Common myeloid progenitor, CD34-positive (primary cell): ENCODE measurements at regions of chr12 and their contacts with region 1.

Region 1: DNA sequence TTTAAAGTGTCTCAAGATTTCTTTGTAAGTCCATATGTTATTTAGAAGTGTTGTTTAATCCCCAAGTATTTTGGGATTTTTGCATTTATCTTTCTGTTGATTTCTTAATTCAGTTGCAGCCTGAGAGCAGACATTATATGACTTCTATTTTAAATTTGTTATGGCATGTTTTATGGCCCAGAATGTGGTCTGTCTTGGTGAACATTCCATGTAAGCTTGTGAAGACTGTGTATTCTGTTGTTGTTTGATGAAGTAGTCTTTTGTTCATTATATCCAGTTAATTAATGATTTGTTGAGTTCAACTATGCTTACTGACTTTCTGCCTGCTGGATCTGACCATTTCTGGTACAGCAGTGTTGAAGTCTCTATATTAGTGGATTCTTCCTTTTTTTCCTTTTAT is 34.0 kb downstream of the LEMD3 start:
- DNase-seq: no peak
- H3K4me3 ChIP-seq: no peak overlapping the region
- H3K27ac ChIP-seq: no peak overlapping the region
- H3K4me1 ChIP-seq: peaks cover 10 to 28% (median 25%) of the 10 kb centered on the region in 4 experiments
- H3K27me3 ChIP-seq: no peaks in the 10 kb centered on the region

Region 2: DNA sequence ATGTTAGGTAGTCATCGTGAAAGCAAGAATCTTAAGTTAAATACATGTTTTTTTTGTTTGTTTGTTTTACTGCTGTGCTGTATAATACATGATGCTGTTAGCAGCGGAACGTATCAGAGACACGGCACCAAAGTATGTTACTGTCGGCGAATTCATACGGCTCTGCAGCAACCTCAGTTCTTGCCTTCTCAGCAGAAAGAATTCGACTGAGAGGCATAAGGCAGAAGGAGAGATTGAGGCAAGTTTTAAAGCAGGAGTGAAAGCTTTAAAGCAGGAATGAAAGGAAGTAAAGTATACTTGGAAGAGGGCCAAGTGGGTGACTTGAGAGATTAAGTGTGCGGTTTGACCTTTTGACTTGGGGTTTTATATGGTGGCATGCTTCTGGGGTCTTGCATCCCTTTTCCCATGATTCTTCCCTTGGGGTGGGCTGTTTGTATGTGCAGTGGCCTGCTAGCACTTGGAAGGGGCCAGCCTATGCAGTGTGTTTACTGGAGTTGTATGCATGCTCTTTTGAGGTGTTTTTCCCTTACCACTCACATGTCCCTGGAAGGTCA is 10.3 kb before region 1 on chr12:
- CTCF ChIA-PET with region 1: interaction called, 6 read pairs
- POLR2A ChIA-PET with region 1: interaction called, 11 read pairs
- DNase-seq: peak in 2 of 3 donors; percentile 71 to 79
- H3K4me3 ChIP-seq: peak overlapping the region in 3 of 7 experiments; percentile 16 to 53 (median 38)
- H3K27ac ChIP-seq: no peak overlapping the region
- H3K4me1 ChIP-seq: peaks cover 6 to 47% (median 11%) of the 10 kb centered on the region in 4 experiments
- H3K27me3 ChIP-seq: no peaks in the 10 kb centered on the region

Region 3: GRCh38 chr12:65259501-65259900 is 56.1 kb after region 1 on chr12:
- CTCF ChIA-PET with region 1: no interaction called
- POLR2A ChIA-PET with region 1: no interaction called
- DNase-seq: no peak
- H3K4me3 ChIP-seq: no peak overlapping the region
- H3K27ac ChIP-seq: no peak overlapping the region
- H3K4me1 ChIP-seq: peaks cover 0 to 2% (median 0%) of the 10 kb centered on the region in 4 experiments
- H3K27me3 ChIP-seq: no peaks in the 10 kb centered on the region